Breast epithelium (tissue), 4 donors: ENCODE measurements at regions of chr17 and their contacts with region 1.

Region 1: GRCh38 chr17:7263083-7264078 is 1.1 kb upstream of the CLDN7 start:
- DNase-seq: peak; percentile 70 to 80
- H3K4me3 ChIP-seq: peak overlapping the region; percentile 27 to 80 (median 69)
- H3K27ac ChIP-seq: peak overlapping the region; percentile 93 to 96
- H3K4me1 ChIP-seq: peaks cover 0 to 6% of the 10 kb centered on the region in 2 donors
- H3K27me3 ChIP-seq: peaks cover 5 to 12% of the 10 kb centered on the region in 2 donors
- CTCF ChIP-seq: no peak
- POLR2A ChIP-seq: no peak

Region 2: DNA sequence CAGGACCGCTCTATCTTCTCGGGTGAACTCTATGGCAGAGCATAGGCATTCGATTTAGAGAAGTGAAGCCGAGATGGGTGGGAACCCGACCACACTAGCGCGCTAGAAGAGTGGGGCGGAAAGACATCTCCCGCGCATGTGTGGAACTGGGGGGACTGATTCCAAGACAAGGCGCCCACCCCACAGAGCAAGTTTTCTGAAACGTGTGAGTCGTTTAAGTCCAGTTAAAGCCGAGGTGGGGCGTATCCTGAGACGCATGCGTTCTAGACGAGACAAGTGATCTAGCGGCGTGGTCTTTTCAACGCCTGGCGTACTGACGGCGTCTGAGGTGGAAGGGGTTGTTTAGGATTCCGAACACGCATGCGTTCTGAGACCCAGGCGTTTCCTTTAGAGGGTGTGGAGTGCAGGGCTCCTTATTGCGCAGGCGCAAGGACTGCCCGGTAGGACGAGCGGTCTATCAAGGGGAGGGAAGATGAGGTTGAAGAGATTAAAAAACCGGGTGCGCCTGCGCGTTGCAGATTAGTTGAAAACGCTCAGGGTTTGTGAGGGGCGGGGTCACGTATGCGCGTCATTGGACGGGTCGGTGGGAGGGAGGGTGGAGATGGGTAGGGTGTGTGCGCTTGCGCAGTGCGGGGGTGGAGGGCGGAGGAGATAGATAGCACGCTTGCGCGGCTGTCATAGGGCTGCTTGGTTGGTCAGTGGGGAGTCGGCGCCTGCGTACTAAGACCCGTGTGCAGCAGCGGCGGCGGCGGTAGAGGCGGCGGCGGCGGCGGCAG is 43.7 kb after region 1 on chr17 and contains the start of gene EIF5A:
- intact Hi-C with region 1: loop called (anchors 2 kb)
- DNase-seq: peak; percentile 99 to 100
- H3K4me3 ChIP-seq: peak within 1 kb of the TSS; percentile 81 to 98 (median 98)
- H3K27ac ChIP-seq: peak within 1 kb of the TSS; percentile 98 to 99
- H3K4me1 ChIP-seq: peaks cover 5 to 19% of the 10 kb centered on the region in 2 donors
- H3K27me3 ChIP-seq: no peaks in the 10 kb centered on the region
- CTCF ChIP-seq: no peak
- POLR2A ChIP-seq: peak; percentile 64
- total RNA-seq, gene EIF5A: 151 to 172 (median 163) TPM

Region 3: DNA sequence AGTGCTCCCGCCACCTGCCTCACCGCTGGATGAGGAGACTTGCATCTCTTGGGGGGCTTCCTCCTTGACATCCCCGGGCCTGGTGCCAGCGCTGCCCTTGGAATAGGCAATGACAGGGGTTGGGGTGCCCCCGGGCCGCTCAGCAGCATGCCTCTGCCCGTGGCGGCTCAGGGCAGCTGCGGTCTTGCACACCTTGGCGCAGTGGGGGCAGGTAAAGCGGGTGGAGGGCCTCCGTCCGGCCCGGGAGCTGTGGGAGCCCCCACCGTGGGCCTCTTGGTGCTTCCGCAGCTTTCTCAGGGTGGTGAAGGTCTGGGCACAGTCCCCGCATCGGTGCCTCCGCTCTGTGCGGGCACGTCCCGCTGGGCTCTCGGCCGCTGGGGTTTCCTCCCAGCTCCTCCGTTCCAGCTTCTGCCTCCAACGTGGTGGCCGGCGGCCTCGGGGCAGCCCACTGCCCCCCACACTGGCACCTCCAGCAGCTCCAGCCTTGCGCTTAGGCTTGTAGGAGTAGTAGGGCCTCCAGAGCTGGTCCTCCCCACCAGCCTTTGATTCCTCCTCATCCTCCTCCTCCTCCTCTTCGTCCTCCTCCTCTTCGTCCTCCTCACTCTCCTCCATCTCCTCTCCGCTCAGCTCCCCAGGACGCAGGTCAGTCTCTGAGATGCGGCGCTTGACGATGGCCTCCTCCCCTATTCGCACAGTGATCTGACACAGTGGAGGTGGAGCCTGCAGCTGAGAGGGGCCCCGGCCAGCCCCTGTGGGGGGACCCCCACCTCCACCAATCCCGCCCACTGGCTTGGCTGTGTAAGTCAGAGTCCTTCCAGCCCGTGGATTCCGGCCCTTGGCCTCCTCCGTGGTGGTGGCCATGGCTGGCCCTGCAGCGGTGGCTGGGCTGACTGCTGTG is 199.3 kb after region 1 on chr17:
- intact Hi-C with region 1: no loop called
- DNase-seq: no peak
- H3K4me3 ChIP-seq: no peak overlapping the region
- H3K27ac ChIP-seq: peak overlapping the region; percentile 70 to 73
- H3K4me1 ChIP-seq: no peaks in the 10 kb centered on the region
- H3K27me3 ChIP-seq: no peaks in the 10 kb centered on the region
- CTCF ChIP-seq: no peak
- POLR2A ChIP-seq: no peak